Prostate gland (tissue), 2 donors: ENCODE measurements at regions of chrX and their contacts with region 1.

Region 1: GRCh38 chrX:115560978-115561604 is at the start of gene PLS3:
- DNase-seq: peak; percentile 60
- H3K4me3 ChIP-seq: peak within 1 kb of the TSS; percentile 40 to 41
- H3K27ac ChIP-seq: peak within 1 kb of the TSS; percentile 69 to 78
- H3K4me1 ChIP-seq: no peaks in the 10 kb centered on the region
- H3K27me3 ChIP-seq: no peaks in the 10 kb centered on the region
- CTCF ChIP-seq: no peak
- POLR2A ChIP-seq: peak; percentile 54
- total RNA-seq, gene PLS3: 32.1 to 69.3 TPM

Region 2: GRCh38 chrX:115330498-115331168 is 230.5 kb before region 1 on chrX:
- intact Hi-C with region 1: loop called (anchors 5 kb)
- DNase-seq: peak; percentile 5
- H3K4me3 ChIP-seq: no peak overlapping the region
- H3K27ac ChIP-seq: no peak overlapping the region
- H3K4me1 ChIP-seq: no peaks in the 10 kb centered on the region
- H3K27me3 ChIP-seq: no peaks in the 10 kb centered on the region
- CTCF ChIP-seq: peak; percentile 56 to 67 (median 62)
- POLR2A ChIP-seq: no peak

Region 3: GRCh38 chrX:115616943-115617563 is 56.0 kb after region 1 on chrX:
- intact Hi-C with region 1: loop called (anchors 5 kb)
- DNase-seq: no peak
- H3K4me3 ChIP-seq: no peak overlapping the region
- H3K27ac ChIP-seq: peak overlapping the region; percentile 18 to 63
- H3K4me1 ChIP-seq: no peaks in the 10 kb centered on the region
- H3K27me3 ChIP-seq: no peaks in the 10 kb centered on the region
- CTCF ChIP-seq: no peak
- POLR2A ChIP-seq: no peak

Region 4: GRCh38 chrX:115642895-115643530 is 81.9 kb after region 1 on chrX:
- intact Hi-C with region 1: loop called (anchors 5 kb)
- DNase-seq: peak; percentile 14
- H3K4me3 ChIP-seq: no peak overlapping the region
- H3K27ac ChIP-seq: no peak overlapping the region
- H3K4me1 ChIP-seq: no peaks in the 10 kb centered on the region
- H3K27me3 ChIP-seq: no peaks in the 10 kb centered on the region
- CTCF ChIP-seq: peak; percentile 72 to 88 (median 87)
- POLR2A ChIP-seq: no peak